Activated B cell treated with CpG ODN at 0.5 μM for 24 hours (primary cell): ENCODE measurements at regions of chr3 and their contacts with region 1.

Region 1: GRCh38 chr3:72270072-72270681 is 485.2 kb upstream of the PROK2 start:
- DNase-seq: no peak
- ATAC-seq: no peak
- H3K4me3 Mint-ChIP-seq: peak overlapping the region; percentile 38
- H3K27ac Mint-ChIP-seq: no peak overlapping the region
- H3K4me1 Mint-ChIP-seq: peaks cover 94% of the 10 kb centered on the region
- H3K27me3 Mint-ChIP-seq: no peaks in the 10 kb centered on the region
- CTCF ChIP-seq: no peak

Region 2: DNA sequence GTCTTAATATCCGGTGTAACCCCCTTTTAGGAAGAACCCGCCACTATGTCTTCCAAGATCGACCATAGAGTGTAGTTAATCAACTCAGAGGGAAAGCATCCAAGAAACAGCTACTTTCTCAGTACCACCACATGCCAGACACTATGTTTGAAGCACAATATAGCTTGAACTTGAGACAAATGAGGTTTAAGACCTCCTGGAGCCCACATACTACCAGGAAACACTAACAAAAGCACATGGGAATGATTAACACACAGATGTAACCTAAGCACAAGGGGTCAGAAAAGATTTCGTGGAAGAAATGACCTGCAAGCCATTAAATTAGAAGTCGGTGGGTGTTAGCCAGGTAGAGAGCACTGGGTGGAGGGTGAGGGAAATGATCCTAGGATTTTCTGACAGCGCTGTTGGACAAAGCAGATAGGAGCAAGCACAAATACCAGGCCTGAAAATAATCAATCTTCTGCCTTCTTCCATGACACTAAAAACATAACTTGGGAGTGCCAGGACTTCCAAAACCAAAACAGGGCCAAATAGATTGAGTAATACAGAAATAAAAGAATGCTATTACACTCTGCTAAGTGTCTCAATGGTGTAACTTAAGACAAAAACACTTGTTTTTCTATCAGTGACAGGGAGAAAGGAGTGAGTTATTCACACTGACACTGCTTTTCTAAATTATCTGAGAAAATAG is 900.3 kb before region 1 on chr3:
- CTCF ChIA-PET with region 1: no interaction called
- POLR2A ChIA-PET with region 1: no interaction called
- intact Hi-C with region 1: no loop called
- DNase-seq: no peak
- ATAC-seq: no peak
- H3K4me3 Mint-ChIP-seq: no peak overlapping the region
- H3K27ac Mint-ChIP-seq: no peak overlapping the region
- H3K4me1 Mint-ChIP-seq: peaks cover 67% of the 10 kb centered on the region
- H3K27me3 Mint-ChIP-seq: no peaks in the 10 kb centered on the region
- CTCF ChIP-seq: no peak

Region 3: GRCh38 chr3:71725279-71725991 is 544.7 kb before region 1 on chr3 and contains the start of gene EIF4E3:
- CTCF ChIA-PET with region 1: no interaction called
- POLR2A ChIA-PET with region 1: no interaction called
- intact Hi-C with region 1: loop called (anchors 10 kb)
- DNase-seq: peak; percentile 53
- ATAC-seq: peak; percentile 72
- H3K4me3 Mint-ChIP-seq: peak within 1 kb of the TSS; percentile 86
- H3K27ac Mint-ChIP-seq: peak within 1 kb of the TSS; percentile 41
- H3K4me1 Mint-ChIP-seq: peaks cover 37% of the 10 kb centered on the region
- H3K27me3 Mint-ChIP-seq: peaks cover 17% of the 10 kb centered on the region
- CTCF ChIP-seq: no peak
- total RNA-seq, gene EIF4E3: 1.8 and 2.0 TPM in 2 replicates

Region 4: GRCh38 chr3:72123908-72124441 is 146.2 kb before region 1 on chr3:
- CTCF ChIA-PET with region 1: no interaction called
- POLR2A ChIA-PET with region 1: no interaction called
- intact Hi-C with region 1: no loop called
- DNase-seq: no peak
- ATAC-seq: no peak
- H3K4me3 Mint-ChIP-seq: no peak overlapping the region
- H3K27ac Mint-ChIP-seq: no peak overlapping the region
- H3K4me1 Mint-ChIP-seq: peaks cover 4% of the 10 kb centered on the region
- H3K27me3 Mint-ChIP-seq: no peaks in the 10 kb centered on the region
- CTCF ChIP-seq: no peak

Region 5: DNA sequence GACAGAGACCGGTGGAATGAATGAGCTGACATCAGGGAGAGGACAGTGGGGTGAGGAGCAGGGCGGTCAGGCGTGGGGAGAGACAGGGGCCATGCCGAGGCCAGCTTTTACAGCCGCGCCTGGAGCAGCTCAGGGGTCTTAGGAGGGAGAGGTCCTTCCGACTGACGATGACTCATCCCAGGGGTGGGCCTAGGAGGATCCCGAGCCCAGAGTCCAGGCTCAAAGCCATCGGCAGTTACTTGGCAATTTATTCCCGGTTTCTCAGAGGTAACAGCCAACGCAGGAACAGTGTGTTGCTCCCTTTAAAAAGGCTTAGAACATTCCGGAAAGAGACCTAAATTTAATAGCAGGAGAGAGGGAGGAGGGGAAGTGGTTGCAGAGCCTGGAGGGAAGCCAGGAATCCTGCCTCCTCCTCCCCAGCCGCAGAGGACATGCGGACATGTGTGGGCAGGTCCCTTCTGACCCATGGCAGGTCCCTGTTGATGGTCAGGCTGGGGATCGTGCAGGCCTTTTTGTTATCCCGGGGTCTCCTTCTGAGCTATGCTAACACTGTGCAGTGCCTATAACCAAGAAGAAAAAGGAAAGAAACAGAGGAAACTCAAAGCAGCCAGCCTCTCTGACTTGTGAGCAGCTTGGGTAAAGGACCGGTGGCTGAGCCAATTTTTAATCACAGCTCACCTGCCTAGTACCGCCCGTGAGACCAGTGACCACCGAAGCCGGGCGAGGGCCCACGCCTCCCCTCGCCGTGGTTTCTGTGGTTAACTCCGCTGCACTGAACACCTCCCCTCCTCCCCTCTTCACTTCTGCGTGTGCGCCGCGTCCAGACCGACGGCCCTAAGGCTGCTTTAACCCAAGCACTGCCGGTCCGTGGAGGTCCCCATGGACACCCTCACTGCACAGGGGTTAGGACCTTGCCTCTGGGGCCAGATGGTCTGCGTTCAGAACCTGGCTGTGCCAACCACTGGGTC is 92.8 kb before region 1 on chr3:
- CTCF ChIA-PET with region 1: no interaction called
- POLR2A ChIA-PET with region 1: no interaction called
- intact Hi-C with region 1: loop called (anchors 5 kb)
- DNase-seq: peak; percentile 35
- ATAC-seq: peak; percentile 20
- H3K4me3 Mint-ChIP-seq: peak overlapping the region; percentile 79
- H3K27ac Mint-ChIP-seq: peak overlapping the region; percentile 75
- H3K4me1 Mint-ChIP-seq: peaks cover 64% of the 10 kb centered on the region
- H3K27me3 Mint-ChIP-seq: peaks cover 2% of the 10 kb centered on the region
- CTCF ChIP-seq: no peak

Region 6: DNA sequence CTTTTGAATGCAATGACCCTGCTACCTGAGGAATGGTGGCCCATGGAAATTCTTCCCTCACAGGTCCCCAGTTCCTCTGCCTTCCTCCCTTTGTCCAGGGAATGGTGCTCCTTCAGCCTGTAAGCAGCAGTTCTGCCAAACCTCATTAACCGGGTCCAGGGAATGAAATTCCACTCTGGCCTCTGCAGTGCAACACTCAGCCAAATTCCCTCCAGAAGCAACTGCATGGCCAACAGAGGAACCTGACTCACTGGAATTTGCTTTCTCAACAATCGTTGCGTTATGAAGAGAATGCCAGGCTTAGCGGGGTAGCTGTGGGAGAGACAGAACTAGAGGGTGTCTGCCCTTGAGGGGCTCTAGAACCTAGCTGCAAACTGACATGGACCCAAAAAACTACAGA is 35.8 kb before region 1 on chr3:
- CTCF ChIA-PET with region 1: no interaction called
- POLR2A ChIA-PET with region 1: no interaction called
- intact Hi-C with region 1: no loop called
- DNase-seq: no peak
- ATAC-seq: no peak
- H3K4me3 Mint-ChIP-seq: no peak overlapping the region
- H3K27ac Mint-ChIP-seq: no peak overlapping the region
- H3K4me1 Mint-ChIP-seq: peaks cover 14% of the 10 kb centered on the region
- H3K27me3 Mint-ChIP-seq: peaks cover 10% of the 10 kb centered on the region
- CTCF ChIP-seq: no peak

Region 7: GRCh38 chr3:72288955-72289691 is 18.9 kb after region 1 on chr3:
- CTCF ChIA-PET with region 1: no interaction called
- POLR2A ChIA-PET with region 1: no interaction called
- intact Hi-C with region 1: loop called (anchors 1 kb)
- DNase-seq: no peak
- ATAC-seq: peak; percentile 83
- H3K4me3 Mint-ChIP-seq: peak overlapping the region; percentile 78
- H3K27ac Mint-ChIP-seq: no peak overlapping the region
- H3K4me1 Mint-ChIP-seq: peaks cover 23% of the 10 kb centered on the region
- H3K27me3 Mint-ChIP-seq: no peaks in the 10 kb centered on the region
- CTCF ChIP-seq: no peak

Region 8: GRCh38 chr3:72582211-72582878 is 312.2 kb after region 1 on chr3:
- CTCF ChIA-PET with region 1: no interaction called
- POLR2A ChIA-PET with region 1: no interaction called
- intact Hi-C with region 1: loop called (anchors 5 kb)
- DNase-seq: no peak
- ATAC-seq: peak; percentile 94
- H3K4me3 Mint-ChIP-seq: peak overlapping the region; percentile 60
- H3K27ac Mint-ChIP-seq: peak overlapping the region; percentile 5
- H3K4me1 Mint-ChIP-seq: peaks cover 32% of the 10 kb centered on the region
- H3K27me3 Mint-ChIP-seq: peaks cover 48% of the 10 kb centered on the region
- CTCF ChIP-seq: no peak